IMR-90 (cell line): ENCODE measurements at regions of chr6 and their contacts with region 1.

Region 1: DNA sequence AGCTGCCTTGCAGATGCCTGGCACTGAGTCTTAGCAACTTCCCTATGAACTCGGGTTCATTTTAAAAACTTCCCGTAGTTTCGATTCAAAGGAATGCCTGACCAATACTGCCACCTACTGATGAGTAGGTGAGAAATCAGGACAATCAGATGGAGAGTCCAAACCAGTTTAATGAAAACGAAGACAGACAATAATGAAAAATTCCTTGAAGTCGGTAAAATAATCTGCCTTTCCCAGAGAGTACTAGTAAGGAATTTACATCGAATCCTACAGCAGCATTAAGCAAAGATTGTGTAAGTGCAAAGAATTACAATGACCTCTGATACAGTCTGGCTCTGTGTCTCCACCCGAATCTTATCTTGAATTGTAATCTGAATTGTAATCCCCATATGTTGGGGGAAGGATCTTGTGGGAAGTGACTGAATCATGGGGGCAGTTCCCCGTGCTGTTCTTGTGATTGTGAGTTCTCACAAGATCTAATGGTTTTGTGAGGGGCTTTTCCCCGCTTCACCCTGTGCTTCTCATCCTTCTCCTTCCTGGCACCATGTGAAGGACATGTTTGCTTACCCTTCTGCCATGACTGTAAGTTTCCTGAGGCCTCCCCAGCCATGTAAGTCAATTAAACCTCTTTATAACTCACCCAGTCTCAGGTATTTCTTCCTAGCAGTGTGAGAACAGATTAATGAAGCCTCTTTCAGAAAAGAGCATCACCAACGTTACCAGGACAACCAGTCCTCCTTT is 134.4 kb downstream of the ARHGAP18 start:
- DNase-seq: peak; percentile 72
- ATAC-seq: peak; percentile 92
- H3K4me3 ChIP-seq: peak overlapping the region; percentile 22; the same call in 1 of the 2 replicates
- H3K27ac ChIP-seq: no peak overlapping the region
- H3K4me1 ChIP-seq: peaks cover 2% of the 10 kb centered on the region; the same call in 1 of the 2 replicates
- H3K27me3 ChIP-seq: no peaks in the 10 kb centered on the region
- CTCF ChIP-seq: peak; percentile 76
- POLR2A ChIP-seq: no peak
- RAD21 ChIP-seq: peak; percentile 89

Region 2: DNA sequence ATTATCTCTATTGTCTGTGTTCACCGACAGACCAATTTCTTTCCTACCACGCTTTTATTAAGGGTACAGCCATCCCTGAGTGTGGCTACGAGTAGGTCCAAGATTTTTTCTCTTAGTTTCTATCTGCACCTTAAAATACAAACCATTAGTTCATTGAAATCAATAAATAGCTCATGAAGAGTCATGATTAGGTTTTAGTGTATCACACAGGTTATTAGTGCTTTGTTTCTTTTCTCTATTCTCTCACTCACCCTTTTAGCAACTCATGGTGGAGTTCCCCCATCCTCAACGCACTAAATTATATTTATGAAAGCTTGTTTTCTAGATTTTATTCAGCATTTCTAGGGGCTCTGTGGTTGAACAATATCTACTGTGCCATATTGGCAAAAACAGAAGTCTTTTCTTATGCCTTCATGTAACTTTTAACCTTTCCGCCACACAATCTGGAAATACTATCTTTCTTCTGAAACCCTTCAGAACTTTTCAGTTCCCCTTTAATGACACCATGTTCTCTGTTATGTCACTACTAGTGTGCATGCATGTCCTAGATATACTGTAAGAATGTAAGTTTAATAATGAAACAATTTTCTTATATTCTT is 820.8 kb before region 1 on chr6:
- CTCF ChIA-PET with region 1: no interaction called
- POLR2A ChIA-PET with region 1: no interaction called
- dilution Hi-C with region 1: no loop called
- in situ Hi-C with region 1: no loop called
- intact Hi-C with region 1: loop called (anchors 10 kb)
- DNase-seq: no peak
- ATAC-seq: no peak
- H3K4me3 ChIP-seq: no peak overlapping the region
- H3K27ac ChIP-seq: no peak overlapping the region
- H3K4me1 ChIP-seq: no peaks in the 10 kb centered on the region
- H3K27me3 ChIP-seq: no peaks in the 10 kb centered on the region; the same call in 1 of the 2 replicates
- CTCF ChIP-seq: no peak
- POLR2A ChIP-seq: no peak
- RAD21 ChIP-seq: no peak

Region 3: GRCh38 chr6:128807577-128807976 is 768.0 kb before region 1 on chr6:
- CTCF ChIA-PET with region 1: no interaction called
- POLR2A ChIA-PET with region 1: no interaction called
- dilution Hi-C with region 1: no loop called
- in situ Hi-C with region 1: no loop called
- intact Hi-C with region 1: loop called (anchors 10 kb)
- DNase-seq: peak; percentile 60
- ATAC-seq: peak; percentile 59
- H3K4me3 ChIP-seq: no peak overlapping the region
- H3K27ac ChIP-seq: no peak overlapping the region
- H3K4me1 ChIP-seq: peaks cover 2% of the 10 kb centered on the region
- H3K27me3 ChIP-seq: peaks cover 2% of the 10 kb centered on the region; the same call in 1 of the 2 replicates
- CTCF ChIP-seq: peak; percentile 61
- POLR2A ChIP-seq: no peak
- RAD21 ChIP-seq: peak; percentile 69

Region 4: DNA sequence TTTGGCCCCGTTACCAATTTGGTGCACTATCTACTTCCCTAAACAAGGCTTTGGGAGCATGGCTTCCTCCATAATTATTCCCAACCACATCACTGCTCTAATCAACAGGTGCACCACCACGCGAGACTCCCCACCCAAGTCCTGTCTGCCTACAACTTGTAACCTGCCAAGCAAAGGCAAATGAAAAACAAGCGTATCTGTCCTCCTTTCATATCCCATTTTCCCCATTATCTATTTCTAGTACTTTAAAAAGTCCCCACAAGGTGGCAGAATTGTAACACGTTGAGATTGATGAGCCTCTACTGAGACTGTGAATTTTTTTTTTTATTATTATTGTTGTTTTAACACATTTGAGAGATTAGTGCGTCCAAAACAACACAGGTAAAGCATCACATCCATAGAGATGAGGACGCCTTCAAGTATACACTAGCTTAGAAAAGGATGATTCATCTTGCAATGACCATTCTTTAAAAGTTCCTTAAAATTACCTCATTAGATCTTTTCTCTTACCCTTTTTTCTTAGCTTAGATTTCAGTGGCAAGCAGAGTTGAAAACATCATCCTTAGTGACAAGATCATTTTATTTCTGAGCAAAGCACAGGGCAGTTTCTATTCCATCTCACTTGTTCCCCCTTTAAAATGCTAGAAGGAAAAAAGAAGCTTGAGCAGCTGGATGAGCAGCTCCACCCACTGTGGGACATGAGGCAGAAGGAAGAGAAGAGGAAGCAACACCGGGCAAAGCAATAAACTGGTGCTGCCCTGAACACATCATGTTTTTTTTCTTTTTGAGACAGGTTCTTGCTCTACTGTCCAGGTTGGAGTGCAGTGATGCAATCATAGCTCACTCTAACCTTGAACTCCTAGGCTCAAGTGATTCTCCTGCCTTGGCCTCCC is 76.4 kb before region 1 on chr6:
- CTCF ChIA-PET with region 1: interaction called, 4 read pairs
- POLR2A ChIA-PET with region 1: no interaction called
- dilution Hi-C with region 1: no loop called
- in situ Hi-C with region 1: loop called (anchors 5 kb)
- intact Hi-C with region 1: loop called (anchors 1 kb)
- DNase-seq: peak; percentile 61
- ATAC-seq: peak; percentile 46
- H3K4me3 ChIP-seq: no peak overlapping the region
- H3K27ac ChIP-seq: peak overlapping the region; percentile 7; the same call in 1 of the 2 replicates
- H3K4me1 ChIP-seq: peaks cover 13% of the 10 kb centered on the region
- H3K27me3 ChIP-seq: no peaks in the 10 kb centered on the region
- CTCF ChIP-seq: peak; percentile 66
- POLR2A ChIP-seq: no peak
- RAD21 ChIP-seq: peak; percentile 71

Region 5: GRCh38 chr6:129774697-129775447 is 199.3 kb after region 1 on chr6:
- CTCF ChIA-PET with region 1: no interaction called
- POLR2A ChIA-PET with region 1: no interaction called
- dilution Hi-C with region 1: no loop called
- in situ Hi-C with region 1: no loop called
- intact Hi-C with region 1: no loop called
- DNase-seq: peak; percentile 82
- ATAC-seq: peak; percentile 97
- H3K4me3 ChIP-seq: peak overlapping the region; percentile 10; the same call in 1 of the 2 replicates
- H3K27ac ChIP-seq: no peak overlapping the region
- H3K4me1 ChIP-seq: no peaks in the 10 kb centered on the region
- H3K27me3 ChIP-seq: no peaks in the 10 kb centered on the region
- CTCF ChIP-seq: peak; percentile 92
- POLR2A ChIP-seq: no peak
- RAD21 ChIP-seq: peak; percentile 83

Region 6: DNA sequence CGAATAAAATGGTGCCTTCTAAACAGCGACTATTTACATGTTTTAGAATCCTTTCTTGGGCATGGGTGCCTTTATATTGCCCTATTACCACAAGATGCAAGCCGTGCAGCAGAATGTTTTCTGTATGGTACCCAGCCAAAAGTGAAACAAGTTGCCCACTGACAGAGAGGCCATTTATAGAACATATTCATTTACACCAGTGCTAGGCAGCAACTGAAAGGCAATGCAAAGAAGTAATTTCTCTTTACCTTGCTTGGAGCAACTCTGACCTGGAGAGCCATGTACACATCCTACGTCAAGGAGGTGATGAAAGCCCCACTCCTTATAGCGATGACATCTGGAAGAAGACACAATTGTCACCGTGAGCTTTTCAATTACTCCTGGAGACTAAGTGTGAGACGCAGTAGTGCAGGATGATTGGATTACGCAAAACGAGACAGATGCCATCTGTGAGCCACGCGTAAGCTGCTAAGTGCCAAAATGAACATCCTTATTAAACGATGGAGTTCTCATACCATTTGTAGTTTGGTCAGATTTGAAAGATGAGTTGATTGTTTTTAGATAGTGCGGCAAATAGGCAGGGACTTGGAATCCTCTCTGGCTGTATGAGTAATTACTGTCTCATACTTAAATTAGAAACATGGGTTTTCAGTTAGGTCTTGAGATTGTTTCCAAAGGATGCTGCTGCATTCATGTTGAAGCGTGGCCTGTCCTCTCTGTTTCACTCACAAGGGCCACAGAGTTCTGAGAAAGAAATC is 285.5 kb after region 1 on chr6 and contains the start of gene TMEM244:
- CTCF ChIA-PET with region 1: no interaction called
- POLR2A ChIA-PET with region 1: no interaction called
- dilution Hi-C with region 1: no loop called
- in situ Hi-C with region 1: no loop called
- intact Hi-C with region 1: loop called (anchors 5 kb)
- DNase-seq: peak; percentile 70
- ATAC-seq: peak; percentile 43
- H3K4me3 ChIP-seq: no peak within 1 kb of the TSS; the same call in 1 of the 2 replicates
- H3K27ac ChIP-seq: peak within 1 kb of the TSS; percentile 7; the same call in 1 of the 2 replicates
- H3K4me1 ChIP-seq: peaks cover 10% of the 10 kb centered on the region
- H3K27me3 ChIP-seq: no peaks in the 10 kb centered on the region
- CTCF ChIP-seq: no peak
- POLR2A ChIP-seq: no peak
- RAD21 ChIP-seq: no peak
- total RNA-seq, gene TMEM244: 0.28 and 0.36 TPM in 2 replicates